Right ventricle myocardium inferior (tissue), 1 donor: ENCODE measurements at regions of chr2 and their contacts with region 1.

Region 1: GRCh38 chr2:213806125-213806726 is 522.0 kb downstream of the SPAG16 start:
- DNase-seq: no peak
- ATAC-seq: no peak

Region 2: GRCh38 chr2:213885485-213885884 is 79.3 kb after region 1 on chr2:
- intact Hi-C with region 1: no loop called
- DNase-seq: no peak
- ATAC-seq: no peak

Region 3: GRCh38 chr2:215002500-215002899 is 1196.3 kb after region 1 on chr2:
- intact Hi-C with region 1: loop called (anchors 10 kb)
- DNase-seq: no peak
- ATAC-seq: no peak